ENCODE measurements at regions of chr2 and their contacts with region 1.

Region 1: GRCh38 chr2:216108967-216109921 is at the start of gene XRCC5:
- DNase-seq: peak; percentile 95 to 98 (median 96)
- H3K4me3 ChIP-seq: peak within 1 kb of the TSS; percentile 94 to 95
- H3K4me3 Mint-ChIP-seq: peak within 1 kb of the TSS; percentile 99 to 100 (median 100)
- H3K27ac ChIP-seq: peak within 1 kb of the TSS; percentile 98
- H3K27ac Mint-ChIP-seq: peak within 1 kb of the TSS; percentile 99 to 100 (median 100)
- H3K4me1 ChIP-seq: peaks cover 51% of the 10 kb centered on the region
- H3K4me1 Mint-ChIP-seq: peaks cover 36 to 61% (median 49%) of the 10 kb centered on the region in 4 donors
- H3K27me3 ChIP-seq: no peaks in the 10 kb centered on the region
- H3K27me3 Mint-ChIP-seq: peaks cover 2 to 3% of the 10 kb centered on the region in 2 donors
- total RNA-seq, gene XRCC5: 235 to 240 TPM

Region 2: GRCh38 chr2:215311625-215312396 is 797.4 kb before region 1 on chr2 and contains the start of gene ATIC:
- CTCF ChIA-PET with region 1: no interaction called
- POLR2A ChIA-PET with region 1: no interaction called
- intact Hi-C with region 1: loop called (anchors 5 kb)
- DNase-seq: peak; percentile 84 to 90 (median 87)
- H3K4me3 ChIP-seq: peak within 1 kb of the TSS; percentile 63 to 93
- H3K4me3 Mint-ChIP-seq: peak within 1 kb of the TSS; percentile 93 to 98 (median 96)
- H3K27ac ChIP-seq: peak within 1 kb of the TSS; percentile 75
- H3K27ac Mint-ChIP-seq: peak within 1 kb of the TSS; percentile 89 to 97 (median 94)
- H3K4me1 ChIP-seq: peaks cover 25% of the 10 kb centered on the region
- H3K4me1 Mint-ChIP-seq: peaks cover 28 to 44% (median 39%) of the 10 kb centered on the region in 4 donors
- H3K27me3 ChIP-seq: no peaks in the 10 kb centered on the region
- H3K27me3 Mint-ChIP-seq: no peaks in the 10 kb centered on the region
- total RNA-seq, gene ATIC: 85.1 to 87.1 TPM

Region 3: DNA sequence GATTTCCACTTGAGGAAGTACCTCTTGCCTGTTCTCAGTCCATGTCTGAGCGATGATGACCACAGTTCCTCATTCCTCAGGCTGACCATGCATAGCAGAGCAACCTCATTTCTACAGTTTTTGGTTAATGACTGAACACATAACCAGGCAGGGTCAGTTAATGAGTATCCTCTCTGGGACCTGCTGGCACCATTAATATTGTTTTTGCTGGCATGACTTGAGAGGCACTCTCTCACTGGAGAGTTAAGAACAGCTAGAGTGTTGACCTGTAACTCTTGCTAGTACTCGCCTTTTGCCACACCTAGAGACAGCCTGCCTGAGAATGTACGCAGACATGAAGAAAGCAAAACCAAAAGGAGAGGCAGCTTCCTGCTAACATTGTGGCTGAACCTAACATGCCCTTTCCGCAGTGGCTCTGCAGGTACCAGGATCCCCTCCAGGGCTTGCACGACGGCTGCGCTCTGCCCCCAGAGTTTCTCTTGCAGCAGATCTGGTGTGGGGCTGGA is 51.5 kb before region 1 on chr2:
- CTCF ChIA-PET with region 1: interaction called, 22 read pairs
- POLR2A ChIA-PET with region 1: interaction called, 35 read pairs
- intact Hi-C with region 1: loop called (anchors 2 kb)
- DNase-seq: peak; percentile 62 to 73 (median 65)
- H3K4me3 ChIP-seq: peak overlapping the region in 1 of 2 donors; percentile 14
- H3K4me3 Mint-ChIP-seq: peak overlapping the region; percentile 75 to 93 (median 85)
- H3K27ac ChIP-seq: peak overlapping the region; percentile 61
- H3K27ac Mint-ChIP-seq: peak overlapping the region; percentile 98 to 99 (median 99)
- H3K4me1 ChIP-seq: peaks cover 23% of the 10 kb centered on the region
- H3K4me1 Mint-ChIP-seq: peaks cover 21 to 41% (median 27%) of the 10 kb centered on the region in 4 donors
- H3K27me3 ChIP-seq: no peaks in the 10 kb centered on the region
- H3K27me3 Mint-ChIP-seq: no peaks in the 10 kb centered on the region

Region 4: GRCh38 chr2:216081487-216082116 is 27.6 kb before region 1 on chr2 and contains the starts of genes PECR and TMEM169:
- CTCF ChIA-PET with region 1: interaction called, 64 read pairs
- POLR2A ChIA-PET with region 1: interaction called, 61 read pairs
- intact Hi-C with region 1: loop called (anchors 1 kb)
- DNase-seq: peak; percentile 69 to 79 (median 74)
- H3K4me3 ChIP-seq: peak within 1 kb of the TSS; percentile 74 to 87
- H3K4me3 Mint-ChIP-seq: peak within 1 kb of the TSS; percentile 83 to 97 (median 94)
- H3K27ac ChIP-seq: peak within 1 kb of the TSS; percentile 65
- H3K27ac Mint-ChIP-seq: peak within 1 kb of the TSS; percentile 78 to 98 (median 92)
- H3K4me1 ChIP-seq: peaks cover 67% of the 10 kb centered on the region
- H3K4me1 Mint-ChIP-seq: peaks cover 41 to 69% (median 55%) of the 10 kb centered on the region in 4 donors
- H3K27me3 ChIP-seq: no peaks in the 10 kb centered on the region
- H3K27me3 Mint-ChIP-seq: no peaks in the 10 kb centered on the region
- total RNA-seq, gene PECR: 16.8 to 20.6 TPM
- total RNA-seq, gene TMEM169: 3.6 to 5.1 TPM

Measured in CD4-positive, alpha-beta memory T cell (primary cell).